ENCODE measurements at regions of chr12 and their contacts with region 1.

Region 1: DNA sequence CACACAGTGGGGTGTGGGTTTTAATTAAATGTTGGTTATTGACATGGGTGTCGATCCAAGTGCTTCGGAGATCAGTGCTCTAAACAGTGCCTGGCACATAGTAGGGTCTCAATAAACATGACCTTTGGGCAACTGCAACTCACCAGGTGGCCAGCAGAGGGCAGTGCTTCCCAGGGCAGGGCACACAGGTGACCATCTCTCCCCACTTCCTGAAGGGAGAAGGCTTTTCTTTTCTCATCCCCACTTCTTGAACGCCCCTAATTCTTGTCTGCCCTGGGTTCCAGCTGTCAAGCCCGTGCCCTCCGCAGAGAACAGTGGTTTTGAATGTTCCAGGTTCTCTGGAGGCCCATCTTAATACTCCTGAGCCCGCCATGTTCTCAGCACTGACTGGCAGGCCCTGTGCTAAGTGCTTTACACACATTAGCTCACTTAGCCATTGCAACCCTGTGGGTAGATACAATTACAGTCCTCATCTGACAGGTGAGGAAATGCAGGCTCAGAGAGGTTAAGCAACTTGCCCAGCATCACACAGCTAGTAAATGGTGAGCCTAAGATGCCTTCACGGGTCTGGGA is 16.3 kb downstream of the RAPGEF3 start:
- DNase-seq: peak; percentile 85
- ATAC-seq: peak; percentile 69
- H3K4me3 Mint-ChIP-seq: no peak overlapping the region
- H3K27ac Mint-ChIP-seq: peak overlapping the region; percentile 35
- H3K4me1 Mint-ChIP-seq: peaks cover 14% of the 10 kb centered on the region
- H3K27me3 Mint-ChIP-seq: peaks cover 26% of the 10 kb centered on the region

Region 2: DNA sequence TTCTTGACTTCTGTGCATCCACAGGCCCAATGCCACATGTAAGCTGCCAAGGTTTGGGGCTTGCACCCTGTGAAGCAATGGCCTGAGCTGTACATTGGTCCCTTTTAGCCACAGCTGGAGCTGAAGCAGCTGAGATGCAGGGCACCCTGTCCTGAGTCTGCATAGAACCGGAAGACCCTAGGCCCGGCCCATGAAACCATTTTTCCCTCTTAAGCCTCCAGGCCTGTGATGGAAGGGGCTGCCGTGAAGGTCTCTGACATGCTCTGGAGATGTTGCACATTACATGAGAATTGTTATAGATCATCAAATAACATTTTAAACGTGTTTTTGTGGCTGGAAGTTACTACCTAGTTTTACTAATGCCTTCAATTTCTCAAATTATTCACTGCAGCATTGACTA is 225.2 kb before region 1 on chr12:
- CTCF ChIA-PET with region 1: no interaction called
- DNase-seq: no peak
- ATAC-seq: no peak
- H3K4me3 Mint-ChIP-seq: no peak overlapping the region
- H3K27ac Mint-ChIP-seq: no peak overlapping the region
- H3K4me1 Mint-ChIP-seq: no peaks in the 10 kb centered on the region
- H3K27me3 Mint-ChIP-seq: no peaks in the 10 kb centered on the region

Region 3: GRCh38 chr12:47705566-47706425 is 36.5 kb before region 1 on chr12 and contains the start of gene RPAP3:
- CTCF ChIA-PET with region 1: interaction called, 16 read pairs
- DNase-seq: peak; percentile 99
- ATAC-seq: peak; percentile 97
- H3K4me3 Mint-ChIP-seq: peak within 1 kb of the TSS; percentile 87
- H3K27ac Mint-ChIP-seq: peak within 1 kb of the TSS; percentile 99
- H3K4me1 Mint-ChIP-seq: peaks cover 55% of the 10 kb centered on the region
- H3K27me3 Mint-ChIP-seq: no peaks in the 10 kb centered on the region
- total RNA-seq, gene RPAP3: 41.3 to 51.4 TPM

Region 4: DNA sequence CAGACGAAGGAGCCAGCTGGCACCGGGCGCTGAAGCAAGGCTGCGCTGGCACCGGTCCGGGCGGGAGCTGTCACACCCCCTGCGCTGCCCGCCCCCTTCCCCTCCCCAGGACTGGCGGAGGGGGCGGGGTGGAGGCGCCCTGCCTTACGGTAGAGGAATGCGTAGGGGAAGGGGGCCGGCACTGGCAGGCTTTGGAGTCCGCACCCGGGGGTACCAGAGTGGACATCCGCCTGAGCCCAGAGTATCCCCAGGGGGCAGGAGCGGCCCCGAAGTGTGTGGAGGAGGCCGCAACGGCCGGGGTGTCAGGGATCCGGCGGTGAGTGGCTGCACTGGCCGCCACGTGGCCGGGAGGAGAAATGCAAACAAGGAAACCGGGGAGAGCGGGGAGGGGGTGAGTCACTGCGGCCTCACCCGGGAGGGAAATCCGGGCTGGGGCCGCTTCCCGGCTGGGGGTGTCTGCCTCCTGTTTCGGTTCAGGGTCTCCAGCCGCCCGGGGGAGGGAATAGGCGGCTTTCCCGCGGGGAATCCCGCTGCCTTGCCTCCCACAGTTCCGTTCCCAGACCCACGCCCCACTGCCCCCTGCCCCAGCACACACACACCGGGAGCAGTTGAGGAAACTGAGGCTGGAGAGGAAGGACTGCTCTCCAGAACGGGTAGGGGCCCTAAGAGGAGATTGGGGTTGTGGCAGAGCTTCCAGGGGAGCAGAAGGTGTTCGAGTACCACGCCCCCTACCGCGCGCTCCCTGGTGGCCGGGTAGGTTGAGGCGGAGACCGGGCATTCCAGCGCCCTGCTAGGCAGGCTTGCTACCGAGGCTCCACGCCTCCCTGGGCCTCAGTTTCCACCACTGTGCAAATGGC is 16.7 kb after region 1 on chr12 and contains the start of gene RAPGEF3:
- CTCF ChIA-PET with region 1: interaction called, 309 read pairs
- DNase-seq: peak; percentile 80
- ATAC-seq: peak; percentile 87
- H3K4me3 Mint-ChIP-seq: peak within 1 kb of the TSS; percentile 70
- H3K27ac Mint-ChIP-seq: peak within 1 kb of the TSS; percentile 45
- H3K4me1 Mint-ChIP-seq: peaks cover 47% of the 10 kb centered on the region
- H3K27me3 Mint-ChIP-seq: peaks cover 2% of the 10 kb centered on the region
- total RNA-seq, gene RAPGEF3: 1.5 to 1.9 TPM

Region 5: DNA sequence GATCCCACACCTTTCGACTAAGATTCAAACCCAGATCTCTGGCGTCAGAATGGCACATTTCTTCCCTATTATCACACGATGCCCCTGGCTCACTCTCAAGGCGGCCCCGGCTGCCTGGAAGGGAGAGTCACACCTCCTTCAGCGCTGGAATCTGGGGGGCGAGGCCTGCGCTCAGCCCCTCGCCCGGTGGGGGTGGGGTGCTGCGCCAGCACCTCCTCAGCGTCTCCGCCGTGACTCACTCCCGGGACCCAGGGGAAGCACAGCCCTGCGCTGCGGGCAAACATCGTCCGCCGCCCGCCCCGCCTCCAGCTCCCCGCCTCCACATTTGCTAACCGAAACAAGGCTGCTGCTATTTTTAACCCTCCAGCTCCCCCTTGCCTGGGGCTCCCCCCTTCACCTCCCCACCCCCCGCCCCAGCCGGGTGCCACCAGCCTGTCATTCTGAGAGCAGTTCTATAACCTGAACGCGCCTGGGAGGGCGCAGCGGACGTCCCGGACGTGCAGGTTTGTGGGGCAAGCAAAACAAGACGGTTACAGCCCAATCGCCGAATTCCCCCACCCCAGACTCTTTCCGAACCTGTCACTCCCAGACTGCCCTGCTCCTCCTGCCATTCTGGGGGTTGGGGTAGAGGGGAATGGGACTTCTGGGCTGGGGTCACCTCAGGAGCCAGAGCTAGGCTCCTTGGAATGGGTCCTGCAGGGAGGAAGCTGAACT is 70.6 kb after region 1 on chr12:
- CTCF ChIA-PET with region 1: interaction called, 16 read pairs
- DNase-seq: peak; percentile 98
- ATAC-seq: peak; percentile 73
- H3K4me3 Mint-ChIP-seq: peak overlapping the region; percentile 91
- H3K27ac Mint-ChIP-seq: peak overlapping the region; percentile 96
- H3K4me1 Mint-ChIP-seq: peaks cover 87% of the 10 kb centered on the region
- H3K27me3 Mint-ChIP-seq: no peaks in the 10 kb centered on the region

Region 6: GRCh38 chr12:47949441-47950308 is 207.3 kb after region 1 on chr12:
- CTCF ChIA-PET with region 1: interaction called, 19 read pairs
- DNase-seq: peak; percentile 60
- ATAC-seq: peak; percentile 76
- H3K4me3 Mint-ChIP-seq: no peak overlapping the region
- H3K27ac Mint-ChIP-seq: no peak overlapping the region
- H3K4me1 Mint-ChIP-seq: peaks cover 14% of the 10 kb centered on the region
- H3K27me3 Mint-ChIP-seq: peaks cover 8% of the 10 kb centered on the region